Activated CD4-positive, alpha-beta memory T cell treated with anti-CD3 and anti-CD28 coated beads for 36 hours (primary cell): ENCODE measurements at regions of chr14 and their contacts with region 1.

Region 1: DNA sequence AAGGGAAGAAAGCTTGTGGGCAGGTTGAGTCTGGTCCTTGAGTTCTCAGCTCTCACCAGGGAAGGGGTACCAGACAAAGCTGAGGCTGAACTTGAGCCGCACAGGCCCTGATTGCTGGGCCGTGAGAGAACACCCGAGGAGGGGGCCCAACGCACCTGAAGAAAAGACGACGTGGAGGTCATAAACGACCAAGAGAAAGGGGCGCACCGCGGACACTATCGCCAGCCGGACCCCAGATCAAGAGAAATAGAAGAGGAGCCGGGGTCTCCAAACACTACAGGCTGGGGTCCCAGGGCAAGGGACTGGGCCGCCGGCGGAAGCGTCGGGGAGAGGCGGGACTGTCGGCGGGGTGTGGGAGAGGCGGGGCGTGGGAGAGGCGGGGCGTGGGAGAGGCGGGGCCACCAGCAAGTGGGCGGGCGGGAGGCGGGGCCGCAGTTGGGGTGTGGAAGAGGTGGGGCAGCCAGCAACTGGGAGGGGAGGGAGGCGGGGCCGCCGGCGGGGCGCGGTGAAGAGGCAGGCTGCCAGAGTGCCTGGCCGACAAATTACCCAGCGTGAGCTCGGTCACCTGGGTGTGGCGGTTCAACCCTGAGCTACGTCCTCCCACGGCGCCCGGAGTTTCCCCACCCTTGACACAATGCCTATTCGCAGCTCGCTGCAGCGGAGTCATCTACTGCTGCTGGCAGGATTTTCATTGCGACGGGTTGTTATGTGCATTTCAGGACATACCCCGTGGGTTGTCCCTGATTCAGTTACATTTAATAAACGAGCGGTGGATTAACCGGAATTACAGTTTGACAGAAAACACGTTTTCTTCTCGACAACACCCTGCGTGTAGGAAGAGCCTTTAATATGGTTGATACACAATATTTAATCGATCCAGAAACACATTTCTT is 15.5 kb upstream of the NEMF start:
- DNase-seq: peak; percentile 99
- H3K4me3 Mint-ChIP-seq: peak overlapping the region; percentile 94
- H3K27ac Mint-ChIP-seq: peak overlapping the region; percentile 85
- H3K4me1 Mint-ChIP-seq: peaks cover 25% of the 10 kb centered on the region
- H3K27me3 Mint-ChIP-seq: no peaks in the 10 kb centered on the region

Region 2: GRCh38 chr14:49879683-49880204 is 11.7 kb after region 1 on chr14:
- CTCF ChIA-PET with region 1: interaction called, 70 read pairs
- POLR2A ChIA-PET with region 1: interaction called, 14 read pairs
- intact Hi-C with region 1: loop called (anchors 1 kb)
- DNase-seq: peak; percentile 87
- H3K4me3 Mint-ChIP-seq: peak overlapping the region; percentile 12
- H3K27ac Mint-ChIP-seq: peak overlapping the region; percentile 62
- H3K4me1 Mint-ChIP-seq: peaks cover 35% of the 10 kb centered on the region
- H3K27me3 Mint-ChIP-seq: no peaks in the 10 kb centered on the region

Region 3: DNA sequence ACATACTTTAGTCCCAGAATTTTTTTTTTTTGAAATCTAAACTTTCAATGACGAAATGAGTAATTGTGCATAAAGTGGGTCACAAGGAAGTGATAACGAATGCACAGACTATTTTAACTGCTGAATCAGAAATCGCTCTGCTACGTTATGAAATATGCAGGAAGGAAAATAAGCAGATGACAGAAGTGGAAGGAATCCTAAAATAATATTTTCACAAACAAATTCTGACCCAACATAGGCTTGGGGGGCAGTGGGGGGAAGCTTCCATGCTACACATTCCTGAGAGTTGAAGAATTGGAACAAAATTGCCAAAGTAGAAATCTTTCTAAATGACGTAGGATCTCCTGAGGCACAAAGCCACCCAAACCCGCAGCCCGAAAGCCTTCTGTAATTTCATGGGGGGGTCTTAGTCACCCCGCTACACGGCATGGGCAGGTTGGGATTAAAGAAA is 114.4 kb after region 1 on chr14:
- CTCF ChIA-PET with region 1: interaction called, 4 read pairs
- POLR2A ChIA-PET with region 1: interaction called, 13 read pairs
- intact Hi-C with region 1: loop called (anchors 1 kb)
- DNase-seq: peak; percentile 44
- H3K4me3 Mint-ChIP-seq: peak overlapping the region; percentile 54
- H3K27ac Mint-ChIP-seq: peak overlapping the region; percentile 82
- H3K4me1 Mint-ChIP-seq: peaks cover 81% of the 10 kb centered on the region
- H3K27me3 Mint-ChIP-seq: no peaks in the 10 kb centered on the region

Region 4: DNA sequence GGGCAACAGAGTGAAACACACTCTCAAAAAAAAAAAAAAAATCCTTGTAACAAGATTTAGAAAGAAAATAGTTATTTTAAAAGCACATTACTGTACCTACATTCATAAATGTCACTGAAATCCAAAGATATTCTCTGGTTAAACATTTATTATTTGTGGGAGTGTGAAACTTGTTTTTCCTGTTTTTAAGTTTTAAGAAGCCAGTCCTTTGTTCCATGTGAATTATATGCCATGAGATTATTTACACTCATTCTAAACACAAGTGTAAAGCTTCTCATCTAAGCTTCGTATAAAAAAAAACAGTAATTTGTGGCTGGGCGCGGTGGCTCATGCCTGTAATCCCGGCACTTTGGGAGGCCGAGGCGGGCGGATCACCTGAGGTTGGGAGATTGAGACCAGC is 233.3 kb after region 1 on chr14:
- CTCF ChIA-PET with region 1: interaction called, 32 read pairs
- POLR2A ChIA-PET with region 1: interaction called, 6 read pairs
- intact Hi-C with region 1: loop called (anchors 1 kb)
- DNase-seq: no peak
- H3K4me3 Mint-ChIP-seq: no peak overlapping the region
- H3K27ac Mint-ChIP-seq: no peak overlapping the region
- H3K4me1 Mint-ChIP-seq: peaks cover 48% of the 10 kb centered on the region
- H3K27me3 Mint-ChIP-seq: no peaks in the 10 kb centered on the region

Region 5: DNA sequence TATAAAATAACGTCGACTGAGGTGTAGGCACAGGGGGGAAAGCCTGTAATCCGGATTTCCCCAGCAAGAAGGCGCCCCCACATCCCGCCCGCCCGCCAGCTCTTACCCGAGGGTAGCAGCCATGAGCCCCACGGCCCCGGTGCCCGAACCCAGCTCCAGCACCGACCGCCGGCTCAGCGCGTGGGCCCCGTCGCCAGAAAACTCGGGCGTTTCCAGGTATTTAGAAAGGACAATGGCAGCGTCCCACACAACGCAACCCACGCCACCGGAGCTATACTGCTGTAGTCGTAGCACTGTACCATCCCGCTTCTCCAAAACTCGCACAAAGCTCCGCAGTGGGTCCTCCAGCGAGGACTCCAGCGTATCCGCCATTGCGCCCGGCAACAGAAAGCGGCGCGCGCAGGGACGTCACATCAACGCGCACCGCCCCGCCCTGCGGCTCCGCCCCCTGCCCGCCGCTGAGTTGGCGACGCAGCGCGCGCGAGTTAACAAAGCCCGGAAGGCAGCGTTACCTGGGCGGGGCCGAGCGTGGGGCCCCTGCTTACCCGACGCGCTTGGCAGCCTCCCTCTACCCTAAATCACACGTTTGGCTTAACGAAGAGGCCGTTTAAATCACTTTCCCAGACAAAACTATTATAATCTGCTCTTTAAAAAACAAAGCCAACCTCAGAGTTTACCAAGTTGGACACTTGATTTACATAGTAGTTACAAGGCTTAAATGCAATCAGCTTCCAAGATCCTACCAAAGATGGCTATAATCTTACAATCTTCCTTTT is 248.3 kb after region 1 on chr14 and contains the start of gene VCPKMT:
- CTCF ChIA-PET with region 1: interaction called, 37 read pairs
- POLR2A ChIA-PET with region 1: interaction called, 3 read pairs
- intact Hi-C with region 1: loop called (anchors 1 kb)
- DNase-seq: peak; percentile 96
- H3K4me3 Mint-ChIP-seq: peak within 1 kb of the TSS; percentile 98
- H3K27ac Mint-ChIP-seq: peak within 1 kb of the TSS; percentile 95
- H3K4me1 Mint-ChIP-seq: peaks cover 37% of the 10 kb centered on the region
- H3K27me3 Mint-ChIP-seq: no peaks in the 10 kb centered on the region
- total RNA-seq, gene VCPKMT: 7.7 to 10.1 TPM

Region 6: GRCh38 chr14:50804181-50804721 is 936.2 kb after region 1 on chr14:
- CTCF ChIA-PET with region 1: no interaction called
- POLR2A ChIA-PET with region 1: no interaction called
- intact Hi-C with region 1: no loop called
- DNase-seq: no peak
- H3K4me3 Mint-ChIP-seq: no peak overlapping the region
- H3K27ac Mint-ChIP-seq: no peak overlapping the region
- H3K4me1 Mint-ChIP-seq: peaks cover 7% of the 10 kb centered on the region
- H3K27me3 Mint-ChIP-seq: no peaks in the 10 kb centered on the region